Caco-2 (cell line): ENCODE measurements at regions of chr16 and their contacts with region 1.

Region 1: GRCh38 chr16:55465077-55465896 is 13.7 kb upstream of the MMP2 start:
- DNase-seq: peak; percentile 86 to 91
- H3K4me3 ChIP-seq: no peak overlapping the region
- H3K4me3 Mint-ChIP-seq: no peak overlapping the region
- H3K27ac Mint-ChIP-seq: no peak overlapping the region
- H3K4me1 ChIP-seq: peaks cover 4% of the 10 kb centered on the region; the same call in 1 of the 2 replicates
- H3K4me1 Mint-ChIP-seq: peaks cover 12% of the 10 kb centered on the region
- H3K27me3 ChIP-seq: no peaks in the 10 kb centered on the region
- H3K27me3 Mint-ChIP-seq: no peaks in the 10 kb centered on the region
- CTCF ChIP-seq: peak; percentile 99 to 100

Region 2: GRCh38 chr16:55494994-55495421 is 29.7 kb after region 1 on chr16:
- CTCF ChIA-PET with region 1: interaction called, 14 read pairs
- POLR2A ChIA-PET with region 1: no interaction called
- intact Hi-C with region 1: no loop called
- DNase-seq: peak; percentile 56 to 69
- H3K4me3 ChIP-seq: no peak overlapping the region
- H3K4me3 Mint-ChIP-seq: no peak overlapping the region
- H3K27ac Mint-ChIP-seq: no peak overlapping the region
- H3K4me1 ChIP-seq: peaks cover 9% of the 10 kb centered on the region; the same call in 1 of the 2 replicates
- H3K4me1 Mint-ChIP-seq: peaks cover 7% of the 10 kb centered on the region
- H3K27me3 ChIP-seq: no peaks in the 10 kb centered on the region
- H3K27me3 Mint-ChIP-seq: no peaks in the 10 kb centered on the region
- CTCF ChIP-seq: peak in 1 of 2 experiments; percentile 41

Region 3: DNA sequence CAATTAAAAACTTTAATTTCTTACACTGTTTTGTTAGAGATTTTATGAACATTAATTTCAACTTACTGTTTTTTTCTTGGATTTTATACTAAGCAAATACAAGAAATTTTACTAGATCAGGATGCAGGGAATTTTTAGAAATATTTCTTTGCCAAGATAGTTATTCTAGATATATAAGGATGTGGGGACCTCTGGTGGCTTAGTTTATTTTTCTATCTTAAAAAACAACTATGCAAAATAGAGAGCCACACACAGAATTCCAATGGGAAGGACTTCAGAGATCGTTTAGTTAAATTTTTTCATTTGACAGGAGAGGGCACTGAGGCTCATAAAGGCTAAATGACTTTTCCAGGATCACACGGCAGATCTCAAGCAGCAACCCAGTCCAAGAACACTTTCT is 78.2 kb after region 1 on chr16:
- CTCF ChIA-PET with region 1: interaction called, 17 read pairs
- POLR2A ChIA-PET with region 1: no interaction called
- intact Hi-C with region 1: loop called (anchors 1 kb)
- DNase-seq: peak in 1 of 2 experiments; percentile 30
- H3K4me3 ChIP-seq: no peak overlapping the region
- H3K4me3 Mint-ChIP-seq: no peak overlapping the region
- H3K27ac Mint-ChIP-seq: no peak overlapping the region
- H3K4me1 ChIP-seq: no peaks in the 10 kb centered on the region; the same call in 1 of the 2 replicates
- H3K4me1 Mint-ChIP-seq: no peaks in the 10 kb centered on the region
- H3K27me3 ChIP-seq: no peaks in the 10 kb centered on the region
- H3K27me3 Mint-ChIP-seq: no peaks in the 10 kb centered on the region
- CTCF ChIP-seq: peak in 1 of 2 experiments; percentile 37

Region 4: GRCh38 chr16:55701442-55702319 is 236.4 kb after region 1 on chr16:
- CTCF ChIA-PET with region 1: interaction called, 58 read pairs
- POLR2A ChIA-PET with region 1: no interaction called
- intact Hi-C with region 1: loop called (anchors 1 kb)
- DNase-seq: peak; percentile 66 to 68
- H3K4me3 ChIP-seq: no peak overlapping the region
- H3K4me3 Mint-ChIP-seq: no peak overlapping the region
- H3K27ac Mint-ChIP-seq: no peak overlapping the region
- H3K4me1 ChIP-seq: no peaks in the 10 kb centered on the region
- H3K4me1 Mint-ChIP-seq: no peaks in the 10 kb centered on the region
- H3K27me3 ChIP-seq: no peaks in the 10 kb centered on the region
- H3K27me3 Mint-ChIP-seq: peaks cover 14% of the 10 kb centered on the region
- CTCF ChIP-seq: peak; percentile 78 to 86